ENCODE measurements at regions of chr1 and their contacts with region 1.

Region 1: GRCh38 chr1:90475631-90476030 is 241.5 kb downstream of the BARHL2 start:
- DNase-seq: no peak
- ATAC-seq: peak; percentile 75
- H3K4me3 ChIP-seq: no peak overlapping the region
- H3K27ac ChIP-seq: no peak overlapping the region
- H3K4me1 ChIP-seq: no peaks in the 10 kb centered on the region
- H3K27me3 ChIP-seq: no peaks in the 10 kb centered on the region
- CTCF ChIP-seq: peak; percentile 17 to 55 (median 51); a peak in 3 of 6 replicates
- EP300 ChIP-seq: no peak
- POLR2A ChIP-seq: no peak
- RAD21 ChIP-seq: 0 out of 2 replicates have a peak, but pooled peaks have one; percentile 22

Region 2: GRCh38 chr1:90074137-90074536 is 401.5 kb before region 1 on chr1:
- CTCF ChIA-PET with region 1: no interaction called
- POLR2A ChIA-PET with region 1: no interaction called
- RAD21 ChIA-PET with region 1: no interaction called
- SMC1A ChIA-PET with region 1: no interaction called
- in situ Hi-C with region 1: no loop called
- intact Hi-C with region 1: no loop called
- DNase-seq: no peak
- ATAC-seq: peak; percentile 42
- H3K4me3 ChIP-seq: no peak overlapping the region
- H3K27ac ChIP-seq: no peak overlapping the region
- H3K4me1 ChIP-seq: no peaks in the 10 kb centered on the region
- H3K27me3 ChIP-seq: no peaks in the 10 kb centered on the region
- CTCF ChIP-seq: no peak
- EP300 ChIP-seq: no peak
- POLR2A ChIP-seq: no peak
- RAD21 ChIP-seq: no peak

Region 3: DNA sequence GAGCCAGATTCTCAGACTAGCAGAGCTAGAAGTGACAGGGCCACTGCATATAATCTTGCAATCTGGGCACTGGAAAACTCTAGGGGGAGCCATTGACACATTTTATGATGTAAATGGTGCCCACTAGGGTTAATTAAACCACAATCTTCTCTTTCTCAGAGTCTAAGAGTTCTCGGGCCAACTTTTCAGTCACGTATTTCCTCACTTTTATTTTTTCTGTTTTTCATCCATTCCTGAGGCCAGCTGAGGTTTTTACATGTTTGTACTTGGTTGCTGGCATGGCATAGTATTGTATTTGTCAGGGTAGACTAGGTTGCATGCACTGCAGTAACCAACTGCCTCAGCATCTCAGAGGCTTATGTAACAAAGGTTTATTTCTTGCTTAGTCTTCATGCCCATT is 342.5 kb before region 1 on chr1:
- CTCF ChIA-PET with region 1: interaction called, 33 read pairs
- POLR2A ChIA-PET with region 1: no interaction called
- RAD21 ChIA-PET with region 1: interaction called, 25 read pairs
- SMC1A ChIA-PET with region 1: interaction called, 19 read pairs
- in situ Hi-C with region 1: no loop called
- intact Hi-C with region 1: no loop called
- DNase-seq: no peak
- ATAC-seq: peak; percentile 92
- H3K4me3 ChIP-seq: no peak overlapping the region
- H3K27ac ChIP-seq: no peak overlapping the region
- H3K4me1 ChIP-seq: no peaks in the 10 kb centered on the region
- H3K27me3 ChIP-seq: no peaks in the 10 kb centered on the region; a peak in 1 of 4 replicates
- CTCF ChIP-seq: peak; percentile 45 to 56 (median 47); a peak in 5 of 6 replicates
- EP300 ChIP-seq: no peak
- POLR2A ChIP-seq: no peak
- RAD21 ChIP-seq: peak; percentile 61

Region 4: GRCh38 chr1:90452491-90452890 is 23.1 kb before region 1 on chr1:
- CTCF ChIA-PET with region 1: interaction called, 3 read pairs
- POLR2A ChIA-PET with region 1: interaction called, 3 read pairs
- RAD21 ChIA-PET with region 1: interaction called, 8 read pairs
- SMC1A ChIA-PET with region 1: interaction called, 24 read pairs
- in situ Hi-C with region 1: no loop called
- intact Hi-C with region 1: no loop called
- DNase-seq: no peak
- ATAC-seq: no peak
- H3K4me3 ChIP-seq: no peak overlapping the region
- H3K27ac ChIP-seq: no peak overlapping the region
- H3K4me1 ChIP-seq: no peaks in the 10 kb centered on the region
- H3K27me3 ChIP-seq: no peaks in the 10 kb centered on the region
- CTCF ChIP-seq: no peak
- EP300 ChIP-seq: no peak
- POLR2A ChIP-seq: no peak
- RAD21 ChIP-seq: no peak

Region 5: GRCh38 chr1:90494748-90495282 is 19.2 kb after region 1 on chr1:
- CTCF ChIA-PET with region 1: interaction called, 68 read pairs
- POLR2A ChIA-PET with region 1: interaction called, 4 read pairs
- RAD21 ChIA-PET with region 1: interaction called, 8 read pairs
- SMC1A ChIA-PET with region 1: interaction called, 63 read pairs
- in situ Hi-C with region 1: no loop called
- intact Hi-C with region 1: no loop called
- DNase-seq: no peak
- ATAC-seq: no peak
- H3K4me3 ChIP-seq: no peak overlapping the region
- H3K27ac ChIP-seq: no peak overlapping the region
- H3K4me1 ChIP-seq: no peaks in the 10 kb centered on the region
- H3K27me3 ChIP-seq: no peaks in the 10 kb centered on the region; a peak in 1 of 4 replicates
- CTCF ChIP-seq: no peak
- EP300 ChIP-seq: no peak
- POLR2A ChIP-seq: no peak
- RAD21 ChIP-seq: no peak

Region 6: DNA sequence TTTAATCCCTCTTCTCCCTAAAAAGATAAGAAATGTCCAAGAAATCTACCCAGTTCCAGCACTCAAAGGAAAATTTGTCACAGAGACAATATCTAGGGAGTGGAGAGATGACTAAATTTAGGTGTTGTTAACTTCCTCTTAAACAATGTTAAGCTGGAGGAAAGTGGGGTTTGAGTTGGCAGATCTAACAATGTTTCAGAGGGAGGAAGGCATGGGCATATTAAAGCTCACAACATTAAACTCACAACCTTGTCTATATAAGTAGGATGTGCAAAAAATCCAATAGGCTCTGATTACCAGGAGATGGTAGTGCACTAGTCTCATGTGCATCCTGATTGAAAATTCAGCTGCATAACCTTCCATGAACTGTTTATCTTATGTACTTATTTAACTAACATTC is 51.3 kb after region 1 on chr1:
- CTCF ChIA-PET with region 1: interaction called, 52 read pairs
- POLR2A ChIA-PET with region 1: interaction called, 12 read pairs
- RAD21 ChIA-PET with region 1: interaction called, 21 read pairs
- SMC1A ChIA-PET with region 1: interaction called, 87 read pairs
- in situ Hi-C with region 1: no loop called
- intact Hi-C with region 1: no loop called
- DNase-seq: no peak
- ATAC-seq: peak; percentile 57
- H3K4me3 ChIP-seq: no peak overlapping the region
- H3K27ac ChIP-seq: no peak overlapping the region
- H3K4me1 ChIP-seq: no peaks in the 10 kb centered on the region
- H3K27me3 ChIP-seq: no peaks in the 10 kb centered on the region
- CTCF ChIP-seq: no peak
- EP300 ChIP-seq: no peak
- POLR2A ChIP-seq: no peak
- RAD21 ChIP-seq: no peak

Region 7: GRCh38 chr1:90550626-90551406 is 75.2 kb after region 1 on chr1:
- CTCF ChIA-PET with region 1: interaction called, 17 read pairs
- POLR2A ChIA-PET with region 1: no interaction called
- RAD21 ChIA-PET with region 1: interaction called, 4 read pairs
- SMC1A ChIA-PET with region 1: interaction called, 11 read pairs
- in situ Hi-C with region 1: no loop called
- intact Hi-C with region 1: no loop called
- DNase-seq: no peak
- ATAC-seq: peak; percentile 82
- H3K4me3 ChIP-seq: no peak overlapping the region
- H3K27ac ChIP-seq: no peak overlapping the region
- H3K4me1 ChIP-seq: no peaks in the 10 kb centered on the region
- H3K27me3 ChIP-seq: no peaks in the 10 kb centered on the region
- CTCF ChIP-seq: 0 out of 6 replicates have a peak, but pooled peaks of 2 of the 3 experiments have one; percentile 8 to 11
- EP300 ChIP-seq: no peak
- POLR2A ChIP-seq: no peak
- RAD21 ChIP-seq: 0 out of 2 replicates have a peak, but pooled peaks have one; percentile 14

Region 8: DNA sequence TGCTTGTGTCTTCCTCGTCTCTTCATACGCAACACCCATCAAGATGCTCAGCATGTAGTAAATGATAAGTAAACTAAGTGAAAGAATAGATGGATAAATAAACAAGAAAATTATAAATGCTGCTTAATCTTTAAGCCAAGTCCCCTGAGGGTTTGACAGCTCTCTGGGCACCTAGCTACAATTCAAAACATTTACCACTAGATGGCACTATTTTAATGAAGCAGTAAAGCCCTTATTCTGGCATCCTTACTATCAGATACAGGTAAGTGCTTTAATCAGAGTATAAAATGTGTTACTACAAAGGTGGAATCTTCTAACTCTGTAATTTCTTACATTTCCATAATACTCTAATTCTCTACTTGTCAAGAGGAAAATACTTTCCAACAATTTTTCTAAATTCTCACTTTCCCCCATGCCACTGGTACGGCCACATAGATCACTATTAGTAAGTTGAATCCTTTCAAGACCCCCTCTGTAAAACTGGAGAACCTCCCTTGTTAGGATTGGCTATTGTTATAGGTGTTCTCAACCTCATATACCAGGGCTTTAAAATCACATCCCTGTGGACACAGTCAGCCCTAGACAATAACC is 103.7 kb after region 1 on chr1:
- CTCF ChIA-PET with region 1: interaction called, 77 read pairs
- POLR2A ChIA-PET with region 1: no interaction called
- RAD21 ChIA-PET with region 1: interaction called, 17 read pairs
- SMC1A ChIA-PET with region 1: interaction called, 43 read pairs
- in situ Hi-C with region 1: no loop called
- intact Hi-C with region 1: no loop called
- DNase-seq: no peak
- ATAC-seq: peak; percentile 85
- H3K4me3 ChIP-seq: no peak overlapping the region
- H3K27ac ChIP-seq: no peak overlapping the region
- H3K4me1 ChIP-seq: no peaks in the 10 kb centered on the region
- H3K27me3 ChIP-seq: no peaks in the 10 kb centered on the region
- CTCF ChIP-seq: peak; percentile 46 to 66 (median 52); a peak in 5 of 6 replicates
- EP300 ChIP-seq: no peak
- POLR2A ChIP-seq: no peak
- RAD21 ChIP-seq: peak; percentile 57